ENCODE measurements at regions of chrX and their contacts with region 1.

Region 1: GRCh38 chrX:23742697-23743622 is at the start of gene ACOT9:
- DNase-seq: peak; percentile 23 to 71 (median 58)
- ATAC-seq: peak; percentile 90 to 91
- H3K4me3 Mint-ChIP-seq: peak within 1 kb of the TSS; percentile 78 to 91 (median 89)
- H3K27ac Mint-ChIP-seq: peak within 1 kb of the TSS; percentile 22 to 90 (median 84)
- H3K4me1 Mint-ChIP-seq: peaks cover 9 to 48% (median 22%) of the 10 kb centered on the region in 4 donors
- H3K27me3 Mint-ChIP-seq: no peaks in the 10 kb centered on the region
- polyA plus RNA-seq, gene ACOT9: 5.9 to 13.0 (median 7.5) TPM

Region 2: DNA sequence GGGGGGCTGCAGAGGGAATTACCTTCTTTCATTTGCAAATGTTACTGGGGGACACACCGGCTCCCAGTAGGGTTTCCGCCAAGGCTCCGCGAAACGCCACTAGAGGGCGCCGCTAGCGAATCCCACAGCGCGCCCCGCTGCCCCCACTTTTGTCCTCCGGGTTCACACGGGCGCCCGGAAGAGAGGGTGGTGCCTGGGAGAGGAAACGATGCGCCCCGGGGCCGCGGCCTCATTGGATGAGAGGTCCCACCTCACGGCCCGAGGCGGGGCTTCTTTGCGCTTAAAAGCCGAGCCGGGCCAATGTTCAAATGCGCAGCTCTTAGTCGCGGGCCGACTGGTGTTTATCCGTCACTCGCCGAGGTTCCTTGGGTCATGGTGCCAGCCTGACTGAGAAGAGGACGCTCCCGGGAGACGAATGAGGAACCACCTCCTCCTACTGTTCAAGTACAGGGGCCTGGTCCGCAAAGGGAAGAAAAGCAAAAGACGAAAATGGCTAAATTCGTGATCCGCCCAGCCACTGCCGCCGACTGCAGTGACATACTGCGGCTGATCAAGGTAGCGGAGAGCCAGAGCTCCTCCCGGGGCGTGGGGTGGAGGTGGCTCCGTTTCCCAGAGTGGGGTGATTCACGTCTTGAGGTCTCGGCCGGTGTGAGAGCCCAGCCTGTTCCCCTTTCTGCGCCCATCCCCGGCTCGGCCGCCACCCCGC is 40.1 kb after region 1 on chrX and contains the start of gene SAT1:
- POLR2A ChIA-PET with region 1: interaction called, 19 read pairs
- DNase-seq: peak; percentile 83 to 97 (median 92)
- ATAC-seq: peak; percentile 90 to 93
- H3K4me3 Mint-ChIP-seq: peak within 1 kb of the TSS; percentile 90 to 98 (median 95)
- H3K27ac Mint-ChIP-seq: peak within 1 kb of the TSS; percentile 94 to 99 (median 98)
- H3K4me1 Mint-ChIP-seq: peaks cover 13 to 45% (median 29%) of the 10 kb centered on the region in 4 donors
- H3K27me3 Mint-ChIP-seq: no peaks in the 10 kb centered on the region
- polyA plus RNA-seq, gene SAT1: 50.1 to 91.0 (median 83.3) TPM

Measured in naive thymus-derived CD8-positive, alpha-beta T cell (primary cell).